HCT116 (cell line): ENCODE measurements at regions of chr9 and their contacts with region 1.

Region 1: GRCh38 chr9:34759432-34760134 is 49.6 kb upstream of the CCL21 start:
- DNase-seq: no peak
- ATAC-seq: no peak
- H3K4me3 ChIP-seq: no peak overlapping the region
- H3K27ac ChIP-seq: no peak overlapping the region
- H3K4me1 ChIP-seq: peaks cover 0 to 5% of the 10 kb centered on the region in 2 experiments; a peak in 1 of 4 replicates
- H3K27me3 ChIP-seq: no peaks in the 10 kb centered on the region
- CTCF ChIP-seq: no peak
- POLR2A ChIP-seq: no peak
- RAD21 ChIP-seq: no peak

Region 2: DNA sequence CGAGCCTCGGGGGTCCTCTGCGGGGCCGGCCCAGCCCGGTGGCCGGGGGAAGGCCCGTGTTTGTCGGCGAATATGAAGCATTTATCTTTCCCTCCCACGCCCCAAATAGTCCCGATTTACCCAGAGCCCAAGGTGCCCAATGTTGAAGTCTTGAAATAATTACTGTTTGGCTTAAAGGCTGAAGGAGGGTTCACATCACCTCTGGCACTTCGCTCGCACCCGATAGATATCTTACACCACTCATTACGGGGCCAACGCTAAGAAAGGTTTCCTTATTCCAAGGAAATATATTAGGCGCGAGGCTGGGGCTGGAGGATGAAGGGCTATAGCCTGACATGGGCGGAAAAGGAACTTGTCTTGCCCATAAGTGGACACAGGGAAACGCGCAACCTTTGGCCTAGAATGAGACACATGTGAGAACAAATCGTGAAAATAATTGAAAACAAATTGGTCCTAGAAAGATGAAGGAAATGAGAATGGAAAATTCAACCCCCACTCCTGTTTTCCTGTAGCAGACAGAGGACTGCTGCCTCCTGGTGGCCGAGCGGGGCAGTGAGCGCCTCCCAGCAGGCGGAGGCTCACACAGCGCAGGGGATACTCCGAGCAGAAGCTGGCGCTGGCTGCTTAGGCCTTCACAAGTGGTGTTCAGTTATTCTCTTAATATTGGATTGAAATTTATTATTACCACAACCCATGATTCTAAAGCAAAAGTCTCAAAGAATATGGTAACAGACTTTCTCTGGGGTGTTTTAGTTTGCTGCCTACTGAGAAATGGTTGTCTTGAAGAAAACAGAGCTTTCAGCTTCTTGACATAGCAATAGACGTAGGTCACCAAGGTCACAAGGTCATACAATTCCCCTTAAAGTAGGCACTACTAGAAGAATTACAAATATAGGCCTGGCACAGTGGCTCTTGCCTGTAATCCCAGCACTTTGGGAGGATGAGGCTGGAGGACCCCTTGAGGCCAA is 57.5 kb before region 1 on chr9:
- CTCF ChIA-PET with region 1: interaction called, 13 read pairs
- POLR2A ChIA-PET with region 1: no interaction called
- RAD21 ChIA-PET with region 1: interaction called in 1 of 2 experiments, 3 read pairs
- intact Hi-C with region 1: no loop called
- DNase-seq: peak; percentile 48
- ATAC-seq: peak; percentile 83
- H3K4me3 ChIP-seq: peak overlapping the region; percentile 41 to 57
- H3K27ac ChIP-seq: no peak overlapping the region
- H3K4me1 ChIP-seq: peaks cover 3 to 14% of the 10 kb centered on the region in 2 experiments; a peak in 2 of 4 replicates
- H3K27me3 ChIP-seq: no peaks in the 10 kb centered on the region
- CTCF ChIP-seq: peak; percentile 96 to 99 (median 97)
- POLR2A ChIP-seq: no peak
- RAD21 ChIP-seq: peak; percentile 77

Region 3: GRCh38 chr9:34869390-34869789 is 109.8 kb after region 1 on chr9:
- CTCF ChIA-PET with region 1: interaction called, 11 read pairs
- POLR2A ChIA-PET with region 1: no interaction called
- RAD21 ChIA-PET with region 1: no interaction called
- intact Hi-C with region 1: no loop called
- DNase-seq: peak; percentile 7
- ATAC-seq: peak; percentile 52; the same call in 1 of the 2 replicates
- H3K4me3 ChIP-seq: no peak overlapping the region
- H3K27ac ChIP-seq: no peak overlapping the region
- H3K4me1 ChIP-seq: no peaks in the 10 kb centered on the region
- H3K27me3 ChIP-seq: peaks cover 14% of the 10 kb centered on the region; the same call in 1 of the 2 replicates
- CTCF ChIP-seq: peak; percentile 51 to 62 (median 55)
- POLR2A ChIP-seq: no peak
- RAD21 ChIP-seq: peak; percentile 61

Region 4: GRCh38 chr9:34994260-34994899 is 234.8 kb after region 1 on chr9:
- CTCF ChIA-PET with region 1: interaction called, 16 read pairs
- POLR2A ChIA-PET with region 1: no interaction called
- RAD21 ChIA-PET with region 1: interaction called in 1 of 2 experiments, 5 read pairs
- intact Hi-C with region 1: no loop called
- DNase-seq: peak; percentile 29
- ATAC-seq: peak; percentile 48
- H3K4me3 ChIP-seq: no peak overlapping the region
- H3K27ac ChIP-seq: no peak overlapping the region
- H3K4me1 ChIP-seq: peaks cover 21 to 52% of the 10 kb centered on the region in 2 experiments
- H3K27me3 ChIP-seq: no peaks in the 10 kb centered on the region
- CTCF ChIP-seq: peak in 2 of 3 experiments; percentile 76 to 81; a peak in 4 of 6 replicates
- POLR2A ChIP-seq: no peak
- RAD21 ChIP-seq: no peak

Region 5: GRCh38 chr9:35096035-35096849 is 336.7 kb after region 1 on chr9 and contains the start of gene PIGO:
- CTCF ChIA-PET with region 1: no interaction called
- POLR2A ChIA-PET with region 1: no interaction called
- RAD21 ChIA-PET with region 1: no interaction called
- intact Hi-C with region 1: loop called (anchors 1 kb)
- DNase-seq: peak; percentile 81
- ATAC-seq: peak; percentile 90
- H3K4me3 ChIP-seq: peak within 1 kb of the TSS; percentile 57 to 92
- H3K27ac ChIP-seq: peak within 1 kb of the TSS; percentile 92
- H3K4me1 ChIP-seq: peaks cover 5 to 19% of the 10 kb centered on the region in 2 experiments; a peak in 3 of 4 replicates
- H3K27me3 ChIP-seq: no peaks in the 10 kb centered on the region
- CTCF ChIP-seq: peak in 2 of 3 experiments; percentile 59 to 78; a peak in 4 of 6 replicates
- POLR2A ChIP-seq: no peak
- RAD21 ChIP-seq: no peak
- total RNA-seq, gene PIGO: 24.0 TPM